ENCODE measurements at regions of chr1 and their contacts with region 1.

Region 1: GRCh38 chr1:93878889-93879586 is at the start of gene DNTTIP2:
- DNase-seq: peak; percentile 75 to 93 (median 86)
- ATAC-seq: peak; percentile 90 to 93 (median 91)
- H3K4me3 ChIP-seq: peak within 1 kb of the TSS; percentile 88 to 97
- H3K4me3 Mint-ChIP-seq: peak within 1 kb of the TSS; percentile 96 to 98 (median 96)
- H3K27ac ChIP-seq: peak within 1 kb of the TSS; percentile 97
- H3K27ac Mint-ChIP-seq: peak within 1 kb of the TSS; percentile 96 to 99
- H3K4me1 ChIP-seq: peaks cover 12 to 21% of the 10 kb centered on the region in 2 experiments
- H3K4me1 Mint-ChIP-seq: peaks cover 49 to 59% (median 56%) of the 10 kb centered on the region in 3 donors
- H3K27me3 ChIP-seq: no peaks in the 10 kb centered on the region
- H3K27me3 Mint-ChIP-seq: no peaks in the 10 kb centered on the region
- total RNA-seq, gene DNTTIP2: 60.4 to 90.7 (median 69.8) TPM

Region 2: GRCh38 chr1:93015590-93015989 is 863.4 kb before region 1 on chr1:
- CTCF ChIA-PET with region 1: no interaction called
- POLR2A ChIA-PET with region 1: no interaction called
- DNase-seq: no peak
- ATAC-seq: no peak
- H3K4me3 ChIP-seq: no peak overlapping the region
- H3K4me3 Mint-ChIP-seq: no peak overlapping the region
- H3K27ac ChIP-seq: no peak overlapping the region
- H3K27ac Mint-ChIP-seq: no peak overlapping the region
- H3K4me1 ChIP-seq: no peaks in the 10 kb centered on the region
- H3K4me1 Mint-ChIP-seq: no peaks in the 10 kb centered on the region
- H3K27me3 ChIP-seq: no peaks in the 10 kb centered on the region
- H3K27me3 Mint-ChIP-seq: peaks cover 0 to 12% of the 10 kb centered on the region in 2 donors

Region 3: GRCh38 chr1:93846211-93846991 is 32.6 kb before region 1 on chr1:
- CTCF ChIA-PET with region 1: interaction called, 5 to 24 read pairs
- POLR2A ChIA-PET with region 1: interaction called, 5 to 16 read pairs
- DNase-seq: peak; percentile 73 to 92 (median 82)
- ATAC-seq: peak; percentile 54 to 62 (median 60)
- H3K4me3 ChIP-seq: peak overlapping the region; percentile 82 to 86
- H3K4me3 Mint-ChIP-seq: peak overlapping the region; percentile 85 to 98 (median 88)
- H3K27ac ChIP-seq: peak overlapping the region; percentile 92
- H3K27ac Mint-ChIP-seq: peak overlapping the region; percentile 93 to 95
- H3K4me1 ChIP-seq: peaks cover 6 to 36% of the 10 kb centered on the region in 2 experiments
- H3K4me1 Mint-ChIP-seq: peaks cover 31 to 39% (median 36%) of the 10 kb centered on the region in 3 donors
- H3K27me3 ChIP-seq: no peaks in the 10 kb centered on the region
- H3K27me3 Mint-ChIP-seq: peaks cover 0 to 5% of the 10 kb centered on the region in 2 donors

Region 4: DNA sequence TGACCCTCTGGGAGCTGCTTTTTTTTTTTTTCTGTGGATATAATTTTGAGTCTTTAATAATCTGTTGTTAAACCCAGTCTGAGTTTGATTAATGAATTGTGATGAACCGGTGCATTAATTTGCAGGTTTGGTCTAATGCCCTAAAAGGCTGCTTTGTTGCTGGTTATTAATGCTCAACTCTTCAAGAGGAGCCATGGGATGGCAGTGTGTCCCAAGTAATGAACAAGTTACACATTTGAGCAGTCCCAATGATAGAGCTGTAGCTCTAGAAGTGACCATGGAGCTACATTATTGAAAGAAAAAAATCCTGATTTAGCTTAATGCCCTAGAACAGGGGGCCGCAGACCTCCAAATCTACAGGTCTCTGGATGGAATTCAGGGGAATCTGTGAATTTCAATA is 1408.0 kb after region 1 on chr1:
- CTCF ChIA-PET with region 1: no interaction called
- POLR2A ChIA-PET with region 1: no interaction called
- DNase-seq: no peak
- ATAC-seq: no peak
- H3K4me3 ChIP-seq: no peak overlapping the region
- H3K4me3 Mint-ChIP-seq: no peak overlapping the region
- H3K27ac ChIP-seq: no peak overlapping the region
- H3K27ac Mint-ChIP-seq: no peak overlapping the region
- H3K4me1 ChIP-seq: no peaks in the 10 kb centered on the region
- H3K4me1 Mint-ChIP-seq: no peaks in the 10 kb centered on the region
- H3K27me3 ChIP-seq: no peaks in the 10 kb centered on the region
- H3K27me3 Mint-ChIP-seq: peaks cover 0 to 3% of the 10 kb centered on the region in 2 donors